ENCODE measurements at regions of chr14 and their contacts with region 1.

Region 1: DNA sequence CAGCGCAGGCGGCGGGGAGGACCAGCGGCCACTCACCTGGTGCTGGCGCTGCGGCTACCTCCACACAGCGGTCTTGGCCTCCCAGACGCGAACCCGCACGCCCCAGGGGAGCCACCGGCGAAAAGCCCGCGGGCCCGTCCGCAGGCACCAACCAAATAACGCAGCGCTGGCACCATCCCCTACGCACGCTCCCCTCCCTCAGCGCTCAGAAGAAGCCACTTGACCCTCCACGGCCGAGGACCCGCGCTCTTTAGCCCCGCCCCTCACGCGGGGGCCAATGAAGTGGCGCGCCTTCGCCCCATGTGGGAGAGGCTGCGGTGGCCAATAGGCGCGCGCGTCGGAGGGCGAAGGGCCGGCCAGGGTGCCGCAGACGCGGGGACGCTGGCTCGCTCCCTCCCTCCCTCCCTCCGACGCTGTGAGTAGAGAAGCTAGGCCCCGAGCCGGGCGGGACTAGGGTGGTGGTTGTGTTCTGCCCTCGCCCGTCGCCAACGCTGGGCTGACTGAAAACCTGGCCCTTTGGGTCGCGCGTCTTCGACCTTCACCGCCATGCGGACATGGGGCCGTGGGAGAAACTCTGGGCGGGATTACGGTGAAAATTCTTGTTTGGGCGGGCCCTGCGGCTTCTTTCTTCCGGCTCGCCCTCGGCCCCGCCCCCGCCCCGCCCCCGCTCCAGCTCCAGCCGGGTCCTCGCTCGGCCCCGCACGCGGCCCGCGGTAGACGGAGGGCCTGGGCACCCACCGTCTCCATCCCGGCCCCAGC is at the starts of genes DMAC2L and L2HGDH:
- DNase-seq: peak; percentile 89
- H3K4me3 Mint-ChIP-seq: peak within 1 kb of the TSS; percentile 94
- H3K27ac Mint-ChIP-seq: peak within 1 kb of the TSS; percentile 95
- H3K4me1 Mint-ChIP-seq: peaks cover 41% of the 10 kb centered on the region
- H3K27me3 Mint-ChIP-seq: no peaks in the 10 kb centered on the region
- total RNA-seq, gene DMAC2L: 11.7 to 13.7 TPM
- total RNA-seq, gene L2HGDH: 13.5 to 14.3 TPM

Region 2: DNA sequence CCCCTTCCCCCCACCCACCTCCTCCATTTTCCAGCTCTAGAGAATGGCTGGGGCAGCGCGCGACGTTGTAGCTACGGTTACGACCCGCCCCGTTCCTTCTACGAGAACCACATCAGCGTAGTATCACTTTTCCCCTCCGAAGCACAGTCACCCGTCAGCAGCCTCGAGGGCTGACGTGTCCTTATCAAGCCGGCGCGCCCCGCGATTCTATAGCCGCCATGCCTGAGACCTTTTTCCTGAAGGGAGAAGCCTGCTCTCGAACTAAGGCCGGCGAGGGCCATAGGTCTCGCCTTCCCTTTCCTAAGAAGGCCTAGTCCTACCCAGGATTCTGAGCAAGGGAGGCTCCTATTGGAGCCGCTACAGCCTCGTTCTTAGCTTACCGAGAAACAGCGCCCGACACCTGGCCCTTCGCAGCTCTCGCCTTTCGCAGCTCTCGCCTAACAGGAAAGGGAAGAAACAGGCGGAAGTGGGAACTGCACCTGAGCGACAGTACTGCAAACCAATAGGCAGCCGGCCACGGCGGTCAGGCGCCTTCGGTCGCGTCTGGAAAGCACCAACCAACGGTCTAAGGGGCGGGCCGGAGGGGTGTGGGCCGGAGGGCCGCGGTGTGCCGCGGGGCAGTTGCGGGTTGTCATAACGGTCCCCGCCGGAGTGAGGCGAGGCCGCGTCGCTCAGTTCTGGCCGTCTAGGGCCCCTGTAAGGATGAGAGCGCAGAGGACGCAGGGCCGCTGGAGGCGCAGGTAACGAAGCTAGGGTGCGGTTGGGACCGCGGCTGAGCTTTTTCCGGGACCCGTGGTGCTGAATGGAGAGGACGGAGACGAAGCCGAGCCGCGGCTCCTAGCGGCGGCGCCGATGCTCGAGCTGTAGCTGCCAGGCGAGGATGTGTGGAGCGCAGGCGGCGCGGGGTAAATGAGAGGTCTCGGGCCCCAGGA is 691.7 kb before region 1 on chr14 and contains the starts of genes MGAT2 and RPL36AL:
- CTCF ChIA-PET with region 1: no interaction called
- intact Hi-C with region 1: loop called (anchors 5 kb)
- DNase-seq: peak; percentile 97
- H3K4me3 Mint-ChIP-seq: peak within 1 kb of the TSS; percentile 97
- H3K27ac Mint-ChIP-seq: peak within 1 kb of the TSS; percentile 97
- H3K4me1 Mint-ChIP-seq: peaks cover 52% of the 10 kb centered on the region
- H3K27me3 Mint-ChIP-seq: no peaks in the 10 kb centered on the region
- total RNA-seq, gene MGAT2: 20.6 to 20.7 TPM
- total RNA-seq, gene RPL36AL: 250 to 266 TPM

Region 3: DNA sequence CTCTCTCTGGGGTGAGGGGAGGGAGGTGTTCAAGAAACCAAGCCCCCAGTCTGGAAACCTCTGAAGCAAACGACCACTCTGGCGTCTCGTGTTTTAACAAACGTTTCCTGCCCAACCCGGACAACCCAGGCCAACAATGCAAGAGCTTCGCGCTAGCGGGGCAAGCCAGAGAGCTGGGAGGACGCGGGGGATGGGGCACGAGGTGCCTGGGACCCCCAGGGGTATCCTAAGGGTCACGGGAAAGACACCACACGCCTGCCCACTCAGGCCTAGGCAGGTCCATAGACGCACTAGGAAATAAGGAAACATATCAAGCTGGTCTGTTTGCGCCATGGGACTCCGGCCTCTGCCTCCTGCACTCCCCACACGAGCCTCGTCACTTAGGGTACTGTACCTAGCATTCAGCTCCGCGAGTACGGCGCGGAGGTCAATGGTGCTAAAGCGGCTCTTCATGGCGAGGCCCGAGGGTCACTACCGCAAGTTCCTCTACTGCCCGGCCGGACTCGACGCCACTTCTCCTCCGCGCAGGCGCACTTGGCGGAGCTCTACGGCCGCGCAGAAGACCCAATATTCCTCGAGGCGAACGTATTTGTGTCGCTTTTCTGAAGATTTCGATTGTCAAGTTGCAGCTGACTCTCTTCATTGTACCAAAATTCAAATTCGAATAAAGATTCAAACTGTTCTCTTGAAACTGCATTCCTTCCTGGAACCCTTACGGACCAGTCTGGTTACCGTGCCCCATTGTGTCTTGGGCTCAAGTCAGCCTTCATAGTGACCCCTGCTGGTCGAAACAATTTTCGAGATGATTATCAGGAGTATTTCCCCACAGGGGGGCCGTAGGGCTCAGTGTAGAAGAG is 459.6 kb before region 1 on chr14 and contains the start of gene NEMF:
- CTCF ChIA-PET with region 1: interaction called, 3 read pairs
- intact Hi-C with region 1: loop called (anchors 2 kb)
- DNase-seq: peak; percentile 90
- H3K4me3 Mint-ChIP-seq: peak within 1 kb of the TSS; percentile 98
- H3K27ac Mint-ChIP-seq: peak within 1 kb of the TSS; percentile 97
- H3K4me1 Mint-ChIP-seq: peaks cover 37% of the 10 kb centered on the region
- H3K27me3 Mint-ChIP-seq: no peaks in the 10 kb centered on the region
- total RNA-seq, gene NEMF: 45.5 to 47.0 TPM

Region 4: GRCh38 chr14:49959822-49960408 is 352.2 kb before region 1 on chr14:
- CTCF ChIA-PET with region 1: no interaction called
- intact Hi-C with region 1: no loop called
- DNase-seq: peak; percentile 63
- H3K4me3 Mint-ChIP-seq: no peak overlapping the region
- H3K27ac Mint-ChIP-seq: peak overlapping the region; percentile 50
- H3K4me1 Mint-ChIP-seq: peaks cover 36% of the 10 kb centered on the region
- H3K27me3 Mint-ChIP-seq: no peaks in the 10 kb centered on the region

Region 5: DNA sequence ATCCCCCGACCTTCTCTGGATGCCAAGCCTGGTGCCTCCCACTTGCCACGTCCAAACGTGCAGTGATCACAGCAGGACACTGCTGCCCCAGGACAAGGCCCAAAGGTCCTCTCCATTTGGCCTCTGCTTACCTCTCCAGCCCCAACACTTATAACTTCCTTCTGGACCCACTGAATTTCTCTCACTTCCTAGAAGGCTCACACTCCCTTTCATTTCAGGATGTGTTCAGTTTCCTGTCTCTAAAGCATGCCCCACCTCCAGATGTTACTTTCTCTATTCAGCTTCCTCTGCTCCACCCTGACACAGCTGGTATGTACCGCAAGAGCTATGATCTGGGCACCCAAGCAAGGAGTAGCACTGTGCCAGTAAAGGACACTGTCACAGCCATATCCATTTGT is 51.6 kb after region 1 on chr14:
- CTCF ChIA-PET with region 1: no interaction called
- intact Hi-C with region 1: loop called (anchors 1 kb)
- DNase-seq: peak; percentile 74
- H3K4me3 Mint-ChIP-seq: peak overlapping the region; percentile 73
- H3K27ac Mint-ChIP-seq: peak overlapping the region; percentile 84
- H3K4me1 Mint-ChIP-seq: peaks cover 18% of the 10 kb centered on the region
- H3K27me3 Mint-ChIP-seq: no peaks in the 10 kb centered on the region

Region 6: DNA sequence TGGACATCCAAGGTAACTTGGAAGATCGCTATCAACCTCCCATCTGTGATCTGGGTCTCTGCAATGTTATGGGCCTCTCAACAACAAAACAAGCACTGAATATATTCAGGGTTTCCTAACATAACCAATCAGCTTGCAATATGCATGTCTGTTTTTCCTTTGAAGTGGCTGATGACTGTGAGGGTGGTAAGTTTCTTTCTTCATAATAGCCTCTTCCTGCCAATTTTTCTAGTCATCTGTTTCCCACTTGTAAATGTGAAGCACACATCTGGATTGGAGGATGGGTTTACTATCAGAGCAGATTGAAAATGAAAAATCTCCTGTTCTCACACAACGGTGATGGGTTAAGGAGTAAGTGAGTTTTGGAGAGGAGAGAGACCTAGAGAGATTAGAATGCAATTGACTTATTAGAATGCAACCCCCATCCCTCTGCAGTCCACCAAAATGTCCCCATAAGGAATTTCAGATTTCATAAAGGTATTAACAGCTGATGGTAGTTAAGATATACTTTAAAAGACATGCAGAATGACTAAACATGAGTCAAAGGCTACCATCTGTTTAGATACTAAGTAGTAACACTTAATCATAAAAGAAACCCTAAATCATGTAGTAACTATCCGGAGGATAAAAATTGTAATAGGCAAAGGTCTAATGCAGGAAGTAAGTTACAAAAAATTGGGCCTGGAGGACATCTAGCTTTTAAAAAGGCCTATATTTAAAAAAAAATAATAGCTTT is 414.4 kb after region 1 on chr14:
- CTCF ChIA-PET with region 1: no interaction called
- intact Hi-C with region 1: loop called (anchors 2 kb)
- DNase-seq: peak; percentile 48
- H3K4me3 Mint-ChIP-seq: peak overlapping the region; percentile 3
- H3K27ac Mint-ChIP-seq: peak overlapping the region; percentile 83
- H3K4me1 Mint-ChIP-seq: peaks cover 28% of the 10 kb centered on the region
- H3K27me3 Mint-ChIP-seq: no peaks in the 10 kb centered on the region

Measured in activated naive CD4-positive, alpha-beta T cell treated with anti-CD3 and anti-CD28 coated beads for 36 hours (primary cell).